Gastrocnemius medialis (tissue), 4 donors: ENCODE measurements at regions of chr10 and their contacts with region 1.

Region 1: DNA sequence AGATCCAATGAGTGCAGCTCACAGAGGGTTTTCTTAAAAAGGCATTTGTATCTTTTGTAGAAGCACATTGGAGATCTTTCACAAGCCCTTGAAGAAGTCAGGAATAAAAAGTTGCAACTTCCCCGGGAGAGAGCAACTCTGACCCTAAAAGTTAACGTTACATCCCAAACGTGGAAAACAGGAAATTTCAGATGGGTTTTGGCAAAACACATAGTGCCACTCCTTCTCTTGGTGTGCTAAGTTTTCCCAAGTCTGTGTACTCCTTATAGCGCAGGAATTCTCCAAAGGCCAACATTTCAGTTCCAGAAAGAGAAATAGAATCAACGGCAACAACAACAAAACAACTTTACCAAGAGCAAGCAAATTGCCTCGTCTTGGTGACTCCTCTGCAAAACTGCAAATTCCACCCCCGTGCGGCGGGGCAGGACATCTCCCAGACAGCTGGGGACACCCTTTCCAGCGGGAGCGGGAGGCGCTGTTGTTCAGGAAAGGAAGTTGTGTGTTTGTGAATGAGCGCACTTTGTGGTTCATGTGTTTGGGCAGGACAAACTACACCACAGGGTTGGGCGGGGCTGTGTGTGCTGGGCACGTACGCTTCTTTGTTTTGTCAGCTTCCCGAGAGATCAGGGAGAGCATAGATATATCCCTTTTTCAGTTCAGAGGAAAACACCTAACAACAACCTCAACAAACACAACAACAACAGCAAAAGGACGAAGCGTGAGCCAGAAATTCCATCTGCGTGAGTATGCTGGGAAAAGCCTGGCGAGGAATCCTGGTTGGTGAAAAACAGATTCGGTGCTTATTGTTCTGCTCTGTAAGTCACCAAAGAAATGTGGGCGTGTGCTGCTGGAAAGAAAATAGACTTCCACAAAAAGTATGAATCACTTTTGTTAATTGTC is 294.7 kb upstream of the PITRM1 start:
- DNase-seq: peak; percentile 83 to 86
- ATAC-seq: peak; percentile 67 to 77
- H3K4me3 ChIP-seq: peak overlapping the region; percentile 34 to 41 (median 38)
- H3K27ac ChIP-seq: peak overlapping the region; percentile 86 to 96 (median 92)
- H3K4me1 ChIP-seq: peaks cover 25 to 43% of the 10 kb centered on the region in 2 donors
- H3K27me3 ChIP-seq: no peaks in the 10 kb centered on the region
- CTCF ChIP-seq: peak; percentile 26 to 78 (median 68)
- POLR2A ChIP-seq: peak; percentile 53 to 62

Region 2: DNA sequence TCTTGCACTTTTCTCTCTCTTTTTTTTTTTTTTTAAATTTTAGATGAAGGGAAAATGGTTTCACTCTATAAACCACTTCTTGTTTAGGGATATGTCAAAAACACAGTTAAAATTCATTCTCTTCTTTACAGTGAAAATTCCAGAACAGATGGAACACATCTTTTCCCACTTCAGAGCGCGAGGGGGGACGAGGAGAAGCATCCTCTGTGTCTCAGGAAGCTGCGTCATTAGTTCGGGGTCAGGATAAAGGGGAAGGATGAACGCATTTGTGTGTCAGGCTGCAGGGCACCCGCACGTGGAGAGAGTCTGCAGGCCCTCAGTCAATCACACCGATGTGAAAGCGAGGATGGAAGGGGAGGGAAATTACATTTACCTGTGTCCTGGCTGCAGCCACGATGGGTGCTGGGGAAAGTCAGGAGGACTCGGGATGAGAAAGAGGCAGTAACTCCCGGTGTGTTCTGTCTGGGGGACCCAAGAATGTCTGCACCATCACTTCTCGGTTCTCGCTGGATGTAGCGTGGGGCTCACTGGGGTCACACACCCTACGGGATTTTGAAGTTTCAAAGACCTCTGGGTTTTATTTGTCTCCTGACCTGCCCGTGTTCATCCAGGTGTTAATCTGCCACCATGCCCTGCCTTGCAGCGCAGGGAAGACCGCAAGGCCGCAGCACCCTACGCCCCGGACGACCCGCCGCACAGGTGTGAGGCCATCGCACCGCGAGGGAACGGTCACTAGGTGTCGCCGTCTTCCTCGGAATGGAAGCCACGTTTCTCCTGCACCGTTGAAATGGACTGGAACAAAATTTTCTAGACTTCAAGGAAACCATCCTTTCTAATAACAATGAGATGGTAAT is 228.0 kb before region 1 on chr10:
- in situ Hi-C with region 1: no loop called
- intact Hi-C with region 1: loop called (anchors 5 kb)
- DNase-seq: peak; percentile 38 to 46
- ATAC-seq: peak; percentile 80 to 90
- H3K4me3 ChIP-seq: no peak overlapping the region
- H3K27ac ChIP-seq: peak overlapping the region in 3 of 4 donors; percentile 56 to 66 (median 59)
- H3K4me1 ChIP-seq: no peaks in the 10 kb centered on the region
- H3K27me3 ChIP-seq: no peaks in the 10 kb centered on the region
- CTCF ChIP-seq: peak; percentile 78 to 91 (median 86)
- POLR2A ChIP-seq: no peak

Region 3: GRCh38 chr10:3720228-3721019 is 253.1 kb after region 1 on chr10:
- in situ Hi-C with region 1: no loop called
- intact Hi-C with region 1: loop called (anchors 5 kb)
- DNase-seq: peak; percentile 84 to 91
- ATAC-seq: peak; percentile 96 to 97
- H3K4me3 ChIP-seq: no peak overlapping the region
- H3K27ac ChIP-seq: peak overlapping the region; percentile 59 to 86 (median 78)
- H3K4me1 ChIP-seq: peaks cover 5% of the 10 kb centered on the region in 2 donors
- H3K27me3 ChIP-seq: no peaks in the 10 kb centered on the region
- CTCF ChIP-seq: no peak
- POLR2A ChIP-seq: peak; percentile 27 to 57

Region 4: GRCh38 chr10:3887885-3888476 is 420.7 kb after region 1 on chr10:
- in situ Hi-C with region 1: no loop called
- intact Hi-C with region 1: loop called (anchors 5 kb)
- DNase-seq: peak; percentile 24 to 32
- ATAC-seq: peak; percentile 43 to 58
- H3K4me3 ChIP-seq: no peak overlapping the region
- H3K27ac ChIP-seq: peak overlapping the region; percentile 72 to 82 (median 78)
- H3K4me1 ChIP-seq: peaks cover 16 to 21% of the 10 kb centered on the region in 2 donors
- H3K27me3 ChIP-seq: no peaks in the 10 kb centered on the region
- CTCF ChIP-seq: no peak
- POLR2A ChIP-seq: no peak